CD4-positive, alpha-beta T cell (primary cell): ENCODE measurements at regions of chr14 and their contacts with region 1.

Region 1: DNA sequence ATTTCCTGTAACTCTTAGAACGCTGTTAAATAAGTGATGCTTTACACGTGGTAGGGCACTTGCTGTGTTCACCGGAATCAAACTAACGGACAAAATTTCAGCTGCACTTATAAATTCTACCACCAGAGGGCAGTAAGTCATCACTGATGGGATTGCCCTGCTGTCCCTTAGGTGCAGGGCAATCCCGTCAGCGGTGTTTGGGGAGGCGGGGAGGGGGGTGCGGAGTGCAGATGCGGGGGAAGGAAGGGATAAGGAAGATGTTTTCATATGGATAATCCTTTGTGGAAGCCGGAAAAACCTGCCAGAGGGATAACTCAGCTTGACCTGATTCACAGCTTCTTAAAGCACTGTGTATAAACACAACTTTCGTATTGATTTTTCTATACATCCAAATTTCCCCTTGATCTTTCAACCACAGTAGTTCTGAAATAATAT is 21.7 kb upstream of the SLC10A1 start:
- DNase-seq: peak in 13 of 14 experiments; percentile 11 to 81 (median 37)
- ATAC-seq: peak; percentile 77
- H3K4me3 ChIP-seq: no peak overlapping the region
- H3K4me3 Mint-ChIP-seq: no peak overlapping the region
- H3K27ac ChIP-seq: no peak overlapping the region
- H3K27ac Mint-ChIP-seq: no peak overlapping the region
- H3K4me1 ChIP-seq: peaks cover 5% of the 10 kb centered on the region
- H3K4me1 Mint-ChIP-seq: peaks cover 6% of the 10 kb centered on the region
- H3K27me3 ChIP-seq: no peaks in the 10 kb centered on the region
- H3K27me3 Mint-ChIP-seq: peaks cover 8% of the 10 kb centered on the region
- CTCF ChIP-seq: peak; percentile 83

Region 2: GRCh38 chr14:70027785-70028428 is 209.1 kb after region 1 on chr14:
- CTCF ChIA-PET with region 1: interaction called, 4 read pairs
- POLR2A ChIA-PET with region 1: no interaction called
- intact Hi-C with region 1: loop called (anchors 1 to 2 kb)
- DNase-seq: peak in 13 of 14 experiments; percentile 20 to 63 (median 41)
- ATAC-seq: no peak
- H3K4me3 ChIP-seq: no peak overlapping the region
- H3K4me3 Mint-ChIP-seq: no peak overlapping the region
- H3K27ac ChIP-seq: no peak overlapping the region
- H3K27ac Mint-ChIP-seq: no peak overlapping the region
- H3K4me1 ChIP-seq: no peaks in the 10 kb centered on the region
- H3K4me1 Mint-ChIP-seq: no peaks in the 10 kb centered on the region
- H3K27me3 ChIP-seq: peaks cover 0 to 3% of the 10 kb centered on the region in 2 experiments
- H3K27me3 Mint-ChIP-seq: peaks cover under 1% of the 10 kb centered on the region
- CTCF ChIP-seq: peak; percentile 48

Region 3: GRCh38 chr14:70073924-70074566 is 255.3 kb after region 1 on chr14:
- CTCF ChIA-PET with region 1: no interaction called
- POLR2A ChIA-PET with region 1: no interaction called
- intact Hi-C with region 1: loop called in 1 of 2 experiments (anchors 2 kb)
- DNase-seq: peak in 8 of 14 experiments; percentile 5 to 54 (median 18)
- ATAC-seq: no peak
- H3K4me3 ChIP-seq: no peak overlapping the region
- H3K4me3 Mint-ChIP-seq: no peak overlapping the region
- H3K27ac ChIP-seq: no peak overlapping the region
- H3K27ac Mint-ChIP-seq: no peak overlapping the region
- H3K4me1 ChIP-seq: no peaks in the 10 kb centered on the region
- H3K4me1 Mint-ChIP-seq: no peaks in the 10 kb centered on the region
- H3K27me3 ChIP-seq: peaks cover 0 to 6% of the 10 kb centered on the region in 2 experiments
- H3K27me3 Mint-ChIP-seq: peaks cover 34% of the 10 kb centered on the region
- CTCF ChIP-seq: peak; percentile 44

Region 4: DNA sequence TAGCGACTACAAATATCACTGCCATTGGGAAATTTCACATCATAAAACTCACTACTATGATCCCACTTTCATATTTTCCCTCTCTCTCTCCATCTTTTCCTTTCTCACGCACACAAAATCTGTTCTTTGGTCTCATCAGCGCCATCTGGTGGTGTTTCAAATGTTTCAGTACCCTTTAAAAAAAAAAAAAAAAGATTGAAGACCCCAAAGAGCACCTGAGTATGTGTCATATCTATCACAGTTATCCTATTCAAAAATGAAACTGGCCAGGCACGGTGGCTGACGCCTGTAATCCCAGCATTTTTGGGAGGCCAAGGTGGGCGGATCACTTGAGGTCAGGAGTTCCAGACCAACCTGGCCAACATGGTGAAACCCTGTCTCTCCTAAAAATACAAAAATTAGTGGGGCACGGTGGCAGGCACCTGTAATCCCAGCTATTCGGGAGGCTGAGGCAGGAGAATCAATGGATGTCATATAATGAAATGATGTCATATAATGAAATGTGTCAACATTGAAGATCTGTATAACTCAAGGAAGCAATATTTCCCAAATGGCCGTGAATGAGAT is 895.4 kb after region 1 on chr14:
- CTCF ChIA-PET with region 1: no interaction called
- POLR2A ChIA-PET with region 1: no interaction called
- intact Hi-C with region 1: loop called in 1 of 2 experiments (anchors 10 kb)
- DNase-seq: peak in 12 of 14 experiments; percentile 12 to 84 (median 36)
- ATAC-seq: no peak
- H3K4me3 ChIP-seq: no peak overlapping the region
- H3K4me3 Mint-ChIP-seq: no peak overlapping the region
- H3K27ac ChIP-seq: no peak overlapping the region
- H3K27ac Mint-ChIP-seq: no peak overlapping the region
- H3K4me1 ChIP-seq: peaks cover 5% of the 10 kb centered on the region
- H3K4me1 Mint-ChIP-seq: peaks cover 5% of the 10 kb centered on the region
- H3K27me3 ChIP-seq: no peaks in the 10 kb centered on the region
- H3K27me3 Mint-ChIP-seq: no peaks in the 10 kb centered on the region
- CTCF ChIP-seq: peak; percentile 95

Region 5: DNA sequence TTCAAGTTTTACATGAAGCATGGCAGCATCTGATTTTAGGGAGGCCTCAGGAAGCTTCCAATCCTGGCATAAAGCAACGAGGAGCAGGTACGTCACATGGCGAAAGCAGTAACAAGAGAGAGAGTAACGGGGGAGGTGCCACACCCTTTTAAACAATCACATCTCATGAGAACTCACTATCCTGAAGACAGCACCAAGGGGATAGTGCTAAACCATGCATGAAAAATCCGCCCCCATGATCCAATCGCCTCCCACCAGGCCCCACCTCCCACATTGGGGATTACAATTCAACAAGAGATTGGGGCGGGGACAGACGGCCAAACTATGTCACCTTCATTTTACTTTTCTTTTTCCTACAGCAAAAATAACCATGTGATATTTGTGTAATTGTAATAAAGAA is 997.8 kb after region 1 on chr14:
- CTCF ChIA-PET with region 1: no interaction called
- POLR2A ChIA-PET with region 1: no interaction called
- intact Hi-C with region 1: loop called (anchors 1 to 5 kb)
- DNase-seq: no peak
- ATAC-seq: no peak
- H3K4me3 ChIP-seq: no peak overlapping the region
- H3K4me3 Mint-ChIP-seq: no peak overlapping the region
- H3K27ac ChIP-seq: no peak overlapping the region
- H3K27ac Mint-ChIP-seq: no peak overlapping the region
- H3K4me1 ChIP-seq: peaks cover 5% of the 10 kb centered on the region
- H3K4me1 Mint-ChIP-seq: peaks cover 15% of the 10 kb centered on the region
- H3K27me3 ChIP-seq: peaks cover 5 to 7% of the 10 kb centered on the region in 2 experiments
- H3K27me3 Mint-ChIP-seq: peaks cover 28% of the 10 kb centered on the region
- CTCF ChIP-seq: no peak

Region 6: DNA sequence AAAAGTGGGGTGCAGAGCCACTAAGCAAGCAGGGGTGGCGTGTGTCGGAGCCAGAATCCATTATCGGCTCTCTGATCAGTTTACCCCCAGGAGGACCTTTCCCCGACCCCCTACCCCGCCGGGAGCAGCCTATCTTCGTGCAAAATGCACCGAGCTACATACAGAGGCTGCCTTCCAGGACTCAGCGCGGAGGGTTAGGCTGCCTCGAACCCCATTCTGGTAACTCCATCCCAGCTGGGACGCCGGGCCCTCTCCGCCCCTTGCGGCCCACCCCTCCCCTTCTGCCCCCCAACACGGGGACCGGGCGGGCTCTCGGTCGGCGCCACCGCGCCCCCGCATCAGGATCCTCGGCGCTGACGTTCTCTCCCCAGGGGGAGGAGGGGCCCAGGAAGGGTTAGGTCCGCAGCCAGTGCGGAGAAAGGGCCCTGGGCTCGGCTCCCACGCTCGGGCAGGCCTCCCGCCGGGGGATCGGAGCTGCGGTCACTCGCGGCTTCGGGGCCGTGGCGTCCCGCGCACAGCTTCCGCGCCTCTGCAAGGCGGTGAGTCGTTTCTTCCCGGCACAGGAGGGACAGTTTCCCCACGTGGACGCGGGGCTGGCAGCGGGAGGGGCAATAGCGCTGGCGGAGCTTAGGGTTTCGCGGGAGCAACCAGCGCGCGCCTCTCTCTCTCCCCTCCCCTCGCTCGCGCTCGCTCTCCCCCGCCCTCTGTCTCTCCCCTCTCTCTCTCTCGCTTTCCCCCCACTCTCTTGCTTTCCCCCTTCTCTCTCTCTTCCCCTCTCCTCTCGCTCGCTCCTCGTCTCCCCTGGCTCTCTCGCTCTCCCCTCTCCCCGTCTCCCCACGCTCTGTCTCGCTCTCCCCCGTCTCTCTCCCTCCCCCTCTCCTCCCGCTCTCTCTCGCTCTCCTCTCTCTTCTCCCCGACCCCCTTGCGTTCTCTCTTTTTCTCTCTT is 1003.1 kb after region 1 on chr14:
- CTCF ChIA-PET with region 1: no interaction called
- POLR2A ChIA-PET with region 1: no interaction called
- intact Hi-C with region 1: loop called (anchors 1 to 5 kb)
- DNase-seq: peak in 13 of 14 experiments; percentile 23 to 81 (median 44)
- ATAC-seq: peak; percentile 46
- H3K4me3 ChIP-seq: peak overlapping the region; percentile 66
- H3K4me3 Mint-ChIP-seq: peak overlapping the region; percentile 83
- H3K27ac ChIP-seq: no peak overlapping the region
- H3K27ac Mint-ChIP-seq: no peak overlapping the region
- H3K4me1 ChIP-seq: peaks cover 18% of the 10 kb centered on the region
- H3K4me1 Mint-ChIP-seq: peaks cover 28% of the 10 kb centered on the region
- H3K27me3 ChIP-seq: peaks cover 5 to 15% of the 10 kb centered on the region in 2 experiments
- H3K27me3 Mint-ChIP-seq: peaks cover 43% of the 10 kb centered on the region
- CTCF ChIP-seq: no peak